Activated naive CD4-positive, alpha-beta T cell treated with anti-CD3 and anti-CD28 coated beads for 36 hours (primary cell): ENCODE measurements at regions of chr15 and their contacts with region 1.

Region 1: GRCh38 chr15:60128000-60128376 is 123.9 kb downstream of the FOXB1 start:
- DNase-seq: no peak
- H3K4me3 Mint-ChIP-seq: peak overlapping the region; percentile 59
- H3K27ac Mint-ChIP-seq: peak overlapping the region; percentile 56
- H3K4me1 Mint-ChIP-seq: peaks cover 40% of the 10 kb centered on the region
- H3K27me3 Mint-ChIP-seq: no peaks in the 10 kb centered on the region

Region 2: GRCh38 chr15:59797756-59798604 is 330.0 kb before region 1 on chr15:
- CTCF ChIA-PET with region 1: interaction called, 3 read pairs
- intact Hi-C with region 1: loop called (anchors 5 kb)
- DNase-seq: no peak
- H3K4me3 Mint-ChIP-seq: no peak overlapping the region
- H3K27ac Mint-ChIP-seq: peak overlapping the region; percentile 41
- H3K4me1 Mint-ChIP-seq: peaks cover 71% of the 10 kb centered on the region
- H3K27me3 Mint-ChIP-seq: no peaks in the 10 kb centered on the region

Region 3: GRCh38 chr15:59997070-59997701 is 130.8 kb before region 1 on chr15:
- CTCF ChIA-PET with region 1: interaction called, 4 read pairs
- intact Hi-C with region 1: loop called (anchors 1 kb)
- DNase-seq: peak; percentile 69
- H3K4me3 Mint-ChIP-seq: peak overlapping the region; percentile 55
- H3K27ac Mint-ChIP-seq: no peak overlapping the region
- H3K4me1 Mint-ChIP-seq: peaks cover 40% of the 10 kb centered on the region
- H3K27me3 Mint-ChIP-seq: peaks cover 87% of the 10 kb centered on the region

Region 4: DNA sequence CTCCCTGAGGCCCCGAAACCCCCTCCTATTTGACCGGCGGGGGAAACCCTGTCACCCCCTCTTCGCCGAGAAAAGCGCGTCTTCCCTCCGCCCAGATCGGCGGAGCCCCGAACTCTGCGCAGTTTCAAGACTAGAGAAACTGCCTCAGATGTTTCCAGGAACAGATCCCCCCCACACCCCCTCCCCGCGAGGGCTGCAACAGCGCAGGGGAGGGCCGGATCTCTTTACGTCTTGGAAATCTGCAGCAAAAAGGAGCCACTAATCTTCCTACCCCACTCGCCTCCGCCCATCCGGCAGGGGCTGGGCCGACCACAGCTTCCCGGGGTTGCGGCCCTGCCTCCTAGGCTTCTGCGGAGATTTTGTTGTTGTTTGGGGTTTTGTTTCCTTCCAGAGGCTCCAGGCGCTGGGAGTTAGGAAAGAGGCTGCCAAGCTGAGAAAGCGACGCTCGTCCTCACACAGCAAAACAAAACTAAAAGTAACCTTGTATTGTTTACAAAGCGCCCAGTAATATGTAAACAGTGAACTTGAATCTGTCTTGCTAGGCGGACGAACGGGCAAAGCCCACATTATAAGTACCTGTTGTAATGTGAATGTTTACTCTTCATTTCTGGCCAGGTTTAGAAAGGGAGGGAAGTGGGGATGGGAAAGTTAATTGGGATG is 121.7 kb before region 1 on chr15:
- CTCF ChIA-PET with region 1: no interaction called
- intact Hi-C with region 1: loop called (anchors 1 kb)
- DNase-seq: peak; percentile 83
- H3K4me3 Mint-ChIP-seq: peak overlapping the region; percentile 82
- H3K27ac Mint-ChIP-seq: peak overlapping the region; percentile 68
- H3K4me1 Mint-ChIP-seq: peaks cover 26% of the 10 kb centered on the region
- H3K27me3 Mint-ChIP-seq: peaks cover 87% of the 10 kb centered on the region

Region 5: GRCh38 chr15:60044636-60045270 is 83.2 kb before region 1 on chr15:
- CTCF ChIA-PET with region 1: no interaction called
- intact Hi-C with region 1: loop called (anchors 1 kb)
- DNase-seq: peak; percentile 54
- H3K4me3 Mint-ChIP-seq: peak overlapping the region; percentile 35
- H3K27ac Mint-ChIP-seq: peak overlapping the region; percentile 23
- H3K4me1 Mint-ChIP-seq: peaks cover 21% of the 10 kb centered on the region
- H3K27me3 Mint-ChIP-seq: peaks cover 2% of the 10 kb centered on the region

Region 6: DNA sequence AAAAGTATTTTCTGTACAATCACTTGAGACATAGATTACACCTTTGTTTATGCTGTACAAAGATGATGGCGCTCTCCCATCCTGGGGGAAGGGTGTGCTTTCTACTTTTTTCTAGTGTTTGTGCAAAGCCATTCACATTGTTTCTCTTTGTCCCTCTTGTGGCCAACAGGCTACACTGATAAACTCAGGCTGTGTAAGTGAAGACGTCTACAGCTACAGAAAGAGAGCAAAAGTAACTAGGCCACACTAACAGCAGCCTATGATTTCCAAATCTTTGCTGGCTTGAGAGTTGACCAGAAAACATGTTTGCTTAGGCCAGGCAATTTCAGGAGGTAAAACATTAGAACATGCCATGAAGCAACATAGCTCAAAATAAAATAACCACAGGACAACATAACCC is 48.8 kb before region 1 on chr15:
- CTCF ChIA-PET with region 1: no interaction called
- intact Hi-C with region 1: loop called (anchors 5 kb)
- DNase-seq: no peak
- H3K4me3 Mint-ChIP-seq: no peak overlapping the region
- H3K27ac Mint-ChIP-seq: no peak overlapping the region
- H3K4me1 Mint-ChIP-seq: peaks cover 31% of the 10 kb centered on the region
- H3K27me3 Mint-ChIP-seq: no peaks in the 10 kb centered on the region

Region 7: GRCh38 chr15:60326824-60327654 is 199.1 kb after region 1 on chr15:
- CTCF ChIA-PET with region 1: no interaction called
- intact Hi-C with region 1: loop called (anchors 5 kb)
- DNase-seq: peak; percentile 54
- H3K4me3 Mint-ChIP-seq: no peak overlapping the region
- H3K27ac Mint-ChIP-seq: no peak overlapping the region
- H3K4me1 Mint-ChIP-seq: peaks cover 2% of the 10 kb centered on the region
- H3K27me3 Mint-ChIP-seq: peaks cover 20% of the 10 kb centered on the region